Dendritic cell treated with granulocyte-macrophage colony-stimulating factor and Interleukin-4, amounts not matched to agents 40 ng/mL and 50 ng/mL, for 4 days (primary cell): ENCODE measurements at regions of chr5 and their contacts with region 1.

Region 1: DNA sequence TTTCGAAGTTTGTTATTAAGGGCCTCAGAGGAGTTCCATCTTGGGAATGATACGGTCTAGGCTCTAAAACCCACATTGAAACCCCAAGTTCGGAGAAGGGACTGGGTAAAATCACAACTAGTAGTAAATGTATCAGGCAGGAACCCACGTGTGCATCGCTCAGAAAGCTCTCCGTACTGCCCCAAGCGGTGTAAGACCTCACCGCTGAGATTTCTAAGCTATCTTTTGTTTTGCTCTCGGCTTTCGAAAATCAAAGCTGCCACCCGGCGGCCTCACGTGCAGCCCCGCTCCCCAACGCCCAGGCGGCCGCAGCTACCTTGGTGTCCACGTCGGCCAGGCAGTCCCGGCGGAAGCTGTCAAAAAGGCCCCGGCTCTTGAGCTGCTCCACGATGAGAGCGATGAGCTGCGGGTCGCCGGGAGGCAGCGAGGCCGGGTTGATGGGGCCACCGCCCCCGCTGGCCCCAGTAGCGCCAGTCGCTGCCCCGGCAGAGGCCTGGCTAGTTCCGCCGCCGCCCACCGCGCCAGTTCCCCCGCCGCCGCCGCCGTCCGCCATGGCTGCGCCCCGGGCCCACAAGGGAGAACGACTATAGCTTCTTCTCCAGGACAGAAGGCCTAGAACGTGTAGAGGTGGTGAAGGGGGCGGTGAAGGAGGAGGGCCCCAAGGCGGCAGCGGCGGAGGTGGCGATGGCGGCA is 420 bp downstream of the BOD1 start:
- H3K4me3 Mint-ChIP-seq: peak overlapping the region; percentile 93
- H3K27ac Mint-ChIP-seq: peak overlapping the region; percentile 92
- H3K4me1 Mint-ChIP-seq: peaks cover 30% of the 10 kb centered on the region
- H3K27me3 Mint-ChIP-seq: no peaks in the 10 kb centered on the region

Region 2: DNA sequence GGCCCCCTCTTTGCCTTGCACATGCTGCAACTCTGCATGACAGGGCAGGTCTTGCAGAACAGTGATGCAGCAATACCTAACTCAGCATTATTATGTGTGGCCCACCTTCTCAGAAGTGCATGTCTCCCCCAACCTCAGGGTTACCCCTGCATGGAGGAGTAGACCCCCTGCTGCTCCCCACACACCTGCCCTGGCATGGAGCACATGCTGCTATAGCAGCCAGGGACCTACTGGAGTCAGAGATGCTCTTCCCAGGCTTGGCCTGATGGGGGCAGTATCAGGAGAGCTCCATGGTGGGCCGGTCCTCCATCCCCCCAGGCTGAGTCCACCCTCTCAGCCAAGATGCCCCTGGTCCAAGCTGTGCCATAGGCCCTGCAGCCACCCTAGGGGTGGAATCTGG is 13.6 kb after region 1 on chr5:
- intact Hi-C with region 1: no loop called
- H3K4me3 Mint-ChIP-seq: no peak overlapping the region
- H3K27ac Mint-ChIP-seq: no peak overlapping the region
- H3K4me1 Mint-ChIP-seq: peaks cover 23% of the 10 kb centered on the region
- H3K27me3 Mint-ChIP-seq: peaks cover 2% of the 10 kb centered on the region

Region 3: DNA sequence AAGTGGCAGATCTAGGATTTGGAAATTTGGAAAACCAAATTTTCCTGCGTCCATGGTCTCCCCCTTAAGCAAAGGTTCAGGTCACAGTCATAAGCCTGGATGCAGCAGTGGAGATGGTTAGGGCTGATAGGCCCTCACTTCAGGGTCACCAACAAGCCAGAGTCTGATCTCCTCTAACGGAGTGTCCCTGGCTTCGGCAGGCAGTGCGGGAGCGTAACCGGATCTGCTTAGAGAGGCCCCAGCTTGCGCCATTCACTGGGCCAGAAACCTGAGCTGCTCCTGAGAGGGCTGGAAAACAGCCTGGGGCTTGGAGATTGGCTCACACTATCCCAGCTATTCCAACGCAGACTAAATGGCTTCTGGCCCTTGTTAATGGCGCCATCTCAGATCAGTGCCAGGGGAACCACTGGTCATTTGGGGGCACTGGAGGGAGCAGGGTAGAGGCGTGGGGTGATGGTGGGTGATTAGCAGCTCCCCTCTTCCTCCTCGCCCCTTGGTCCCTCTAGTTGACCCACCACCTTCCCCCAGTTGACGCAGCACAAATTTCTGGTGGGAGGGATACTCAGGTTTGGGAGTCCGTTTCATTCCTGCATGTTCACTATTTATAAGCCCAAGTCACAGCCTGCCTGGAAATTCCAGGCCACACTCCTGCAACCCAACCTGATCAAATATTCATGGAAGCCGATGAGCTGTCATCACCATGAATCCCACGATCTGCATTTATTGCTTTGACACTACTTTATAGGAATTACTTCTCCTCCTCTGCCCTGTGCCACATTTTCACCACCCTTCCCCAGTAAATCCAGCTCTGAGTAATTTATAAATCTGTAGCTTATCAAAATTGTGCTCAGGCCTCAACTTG is 137.5 kb after region 1 on chr5:
- intact Hi-C with region 1: no loop called
- H3K4me3 Mint-ChIP-seq: no peak overlapping the region
- H3K27ac Mint-ChIP-seq: no peak overlapping the region
- H3K4me1 Mint-ChIP-seq: peaks cover 16% of the 10 kb centered on the region
- H3K27me3 Mint-ChIP-seq: peaks cover 3% of the 10 kb centered on the region

Region 4: GRCh38 chr5:173781814-173782670 is 166.0 kb after region 1 on chr5:
- intact Hi-C with region 1: loop called (anchors 2 kb)
- H3K4me3 Mint-ChIP-seq: peak overlapping the region; percentile 2
- H3K27ac Mint-ChIP-seq: peak overlapping the region; percentile 96
- H3K4me1 Mint-ChIP-seq: peaks cover 85% of the 10 kb centered on the region
- H3K27me3 Mint-ChIP-seq: no peaks in the 10 kb centered on the region

Region 5: GRCh38 chr5:173887610-173888472 is 271.8 kb after region 1 on chr5 and contains the start of gene CPEB4:
- intact Hi-C with region 1: loop called (anchors 1 kb)
- H3K4me3 Mint-ChIP-seq: peak within 1 kb of the TSS; percentile 94
- H3K27ac Mint-ChIP-seq: peak within 1 kb of the TSS; percentile 94
- H3K4me1 Mint-ChIP-seq: peaks cover 70% of the 10 kb centered on the region
- H3K27me3 Mint-ChIP-seq: no peaks in the 10 kb centered on the region

Region 6: DNA sequence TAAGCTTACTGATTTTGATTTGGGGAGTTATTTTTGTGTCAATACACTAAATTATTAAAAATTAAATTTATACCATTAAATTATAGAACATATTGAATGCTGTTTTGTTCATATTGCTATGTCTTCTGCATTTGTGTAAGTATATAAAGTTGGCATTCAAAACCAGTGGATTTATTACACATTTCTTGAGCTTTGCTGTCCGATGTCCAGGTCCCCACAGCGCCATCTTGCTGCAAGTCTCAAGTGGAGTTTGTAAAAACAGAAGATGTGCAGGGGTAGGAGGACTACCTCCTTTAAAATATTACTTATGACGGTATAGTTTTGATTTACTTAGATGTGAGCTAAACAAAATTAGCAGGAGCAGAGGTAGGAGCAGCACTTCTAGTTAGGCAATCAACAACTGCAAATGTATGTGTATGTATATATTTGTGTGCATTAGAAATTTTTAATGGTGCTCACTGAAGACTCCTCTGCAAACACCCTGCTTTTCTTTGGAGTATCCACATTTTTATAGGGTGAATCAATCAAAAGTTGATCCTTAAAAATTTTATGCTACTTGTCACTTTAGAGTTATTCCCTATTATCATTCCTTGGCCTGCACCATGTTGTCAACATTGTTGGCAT is 309.5 kb after region 1 on chr5:
- intact Hi-C with region 1: loop called (anchors 5 kb)
- H3K4me3 Mint-ChIP-seq: no peak overlapping the region
- H3K27ac Mint-ChIP-seq: peak overlapping the region; percentile 35
- H3K4me1 Mint-ChIP-seq: peaks cover 42% of the 10 kb centered on the region
- H3K27me3 Mint-ChIP-seq: no peaks in the 10 kb centered on the region

Region 7: DNA sequence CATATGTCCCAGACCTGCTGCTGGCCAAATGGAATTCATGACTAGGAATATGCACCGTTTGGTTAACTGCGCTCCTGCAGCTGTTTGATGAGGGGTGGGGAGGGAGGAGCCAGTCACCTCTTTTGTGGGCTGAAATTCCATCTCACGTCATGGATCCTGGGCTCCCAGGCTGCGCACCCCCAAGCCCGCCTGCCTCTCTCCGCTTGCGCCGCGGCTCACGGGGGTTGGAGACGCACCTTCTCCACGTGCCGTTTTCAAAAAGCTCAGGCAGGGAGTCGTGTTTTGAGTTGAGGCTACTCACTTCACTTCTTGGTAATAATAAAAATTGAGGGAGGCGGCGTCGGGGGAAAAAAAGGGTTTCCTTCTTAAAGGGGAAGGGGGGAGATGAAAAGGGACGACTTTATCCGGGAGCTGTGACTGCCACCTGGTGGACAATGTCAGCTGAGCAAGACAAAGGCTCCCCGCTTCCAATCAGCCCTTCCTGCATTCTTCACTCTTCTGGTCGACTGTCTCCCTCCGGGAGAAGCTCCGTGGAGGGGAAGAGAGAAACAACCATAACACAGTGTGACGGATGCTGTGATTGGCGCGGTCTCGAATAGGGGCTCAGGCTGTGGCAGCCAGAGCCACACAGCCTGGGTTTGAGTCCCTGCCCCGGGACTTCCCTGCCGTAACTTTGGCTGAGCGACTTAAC is 357.0 kb after region 1 on chr5:
- intact Hi-C with region 1: loop called (anchors 1 kb)
- H3K4me3 Mint-ChIP-seq: peak overlapping the region; percentile 77
- H3K27ac Mint-ChIP-seq: peak overlapping the region; percentile 15
- H3K4me1 Mint-ChIP-seq: peaks cover 26% of the 10 kb centered on the region
- H3K27me3 Mint-ChIP-seq: peaks cover 40% of the 10 kb centered on the region

Region 8: DNA sequence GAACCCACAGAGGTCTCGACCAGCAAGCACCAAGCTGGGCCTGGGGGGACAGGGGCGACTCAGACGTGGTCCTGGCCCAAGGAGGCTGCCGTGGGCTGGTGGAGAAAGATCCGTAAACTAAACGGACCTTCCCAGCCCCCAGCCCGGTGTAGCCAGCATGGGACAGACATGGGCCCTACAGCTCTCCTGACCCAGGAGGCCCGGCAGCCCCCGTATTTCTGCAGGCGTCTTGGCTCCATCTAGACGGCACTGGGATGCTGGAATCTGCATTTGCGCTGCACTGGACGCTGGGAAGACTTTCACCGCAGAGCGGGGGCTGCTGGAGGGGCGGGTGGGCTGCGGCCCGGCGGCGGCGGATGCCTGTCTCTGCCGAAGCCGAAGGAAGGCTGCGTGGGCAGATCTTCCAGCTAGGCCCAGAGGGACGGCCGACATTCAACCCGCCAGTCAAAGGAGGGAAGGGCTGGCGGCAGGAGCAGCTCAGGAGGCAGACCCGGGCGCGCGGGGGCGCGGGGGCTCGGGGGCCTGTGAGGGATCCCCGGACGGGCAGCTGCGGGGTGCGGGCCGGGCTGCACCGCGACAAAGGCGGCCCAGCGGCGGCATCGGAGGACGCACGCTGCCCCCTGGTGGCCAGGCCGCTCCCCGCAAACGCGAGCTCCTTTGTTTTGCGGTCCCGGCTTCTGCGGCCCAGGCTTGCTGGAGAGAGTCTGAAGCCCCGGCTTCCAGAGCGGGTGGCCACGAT is 695.7 kb after region 1 on chr5:
- intact Hi-C with region 1: loop called (anchors 1 kb)
- H3K4me3 Mint-ChIP-seq: peak overlapping the region; percentile 47
- H3K27ac Mint-ChIP-seq: no peak overlapping the region
- H3K4me1 Mint-ChIP-seq: peaks cover 5% of the 10 kb centered on the region
- H3K27me3 Mint-ChIP-seq: peaks cover 34% of the 10 kb centered on the region